Colonic mucosa (tissue), 4 donors: ENCODE measurements at regions of chr5 and their contacts with region 1.

Region 1: GRCh38 chr5:142699184-142699720 is 13.4 kb upstream of the FGF1 start:
- DNase-seq: peak; percentile 88
- H3K4me3 ChIP-seq: no peak overlapping the region
- H3K27ac ChIP-seq: no peak overlapping the region
- H3K4me1 ChIP-seq: no peaks in the 10 kb centered on the region
- H3K27me3 ChIP-seq: no peaks in the 10 kb centered on the region
- CTCF ChIP-seq: peak; percentile 96

Region 2: DNA sequence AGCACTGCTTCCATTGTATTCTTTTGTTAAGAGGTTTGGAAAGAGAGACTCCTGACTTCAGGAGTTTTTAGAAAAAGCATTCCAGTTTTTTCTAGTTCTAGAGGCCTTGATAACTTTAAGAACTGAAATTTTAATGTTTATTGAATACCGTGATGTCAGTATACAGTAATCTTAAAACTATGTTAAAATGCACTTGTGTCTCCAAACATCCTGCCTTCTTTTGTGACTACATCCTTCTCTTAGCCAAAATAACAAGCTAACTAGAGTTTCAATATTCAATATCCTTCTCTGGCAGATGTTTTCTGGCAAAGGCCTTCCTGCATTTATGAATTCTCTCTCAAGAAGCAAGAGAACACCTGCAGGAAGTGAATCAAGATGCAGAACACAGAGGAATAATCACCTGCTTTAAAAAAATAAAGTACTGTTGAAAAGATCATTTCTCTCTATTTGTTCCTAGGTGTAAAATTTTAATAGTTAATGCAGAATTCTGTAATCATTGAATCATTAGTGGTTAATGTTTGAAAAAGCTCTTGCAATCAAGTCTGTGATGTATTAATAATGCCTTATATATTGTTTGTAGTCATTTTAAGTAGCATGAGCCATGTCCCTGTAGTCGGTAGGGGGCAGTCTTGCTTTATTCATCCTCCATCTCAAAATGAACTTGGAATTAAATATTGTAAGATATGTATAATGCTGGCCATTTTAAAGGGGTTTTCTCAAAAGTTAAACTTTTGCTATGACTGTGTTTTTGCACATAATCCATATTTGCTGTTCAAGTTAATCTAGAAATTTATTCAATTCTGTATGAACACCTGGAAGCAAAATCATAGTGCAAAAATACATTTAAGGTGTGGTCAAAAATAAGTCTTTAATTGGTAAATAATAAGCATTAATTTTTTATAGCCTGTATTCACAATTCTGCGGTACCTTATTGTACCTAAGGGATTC is 547.5 kb before region 1 on chr5:
- intact Hi-C with region 1: loop called (anchors 10 kb)
- DNase-seq: peak; percentile 67
- H3K4me3 ChIP-seq: no peak overlapping the region
- H3K27ac ChIP-seq: no peak overlapping the region
- H3K4me1 ChIP-seq: no peaks in the 10 kb centered on the region
- H3K27me3 ChIP-seq: no peaks in the 10 kb centered on the region
- CTCF ChIP-seq: peak; percentile 87

Region 3: GRCh38 chr5:142611154-142611553 is 88.1 kb before region 1 on chr5:
- intact Hi-C with region 1: loop called (anchors 2 kb)
- DNase-seq: peak; percentile 75
- H3K4me3 ChIP-seq: no peak overlapping the region
- H3K27ac ChIP-seq: no peak overlapping the region
- H3K4me1 ChIP-seq: no peaks in the 10 kb centered on the region
- H3K27me3 ChIP-seq: no peaks in the 10 kb centered on the region
- CTCF ChIP-seq: peak; percentile 79

Region 4: GRCh38 chr5:142655339-142656267 is 43.6 kb before region 1 on chr5:
- intact Hi-C with region 1: loop called (anchors 2 kb)
- DNase-seq: peak; percentile 79
- H3K4me3 ChIP-seq: no peak overlapping the region
- H3K27ac ChIP-seq: no peak overlapping the region
- H3K4me1 ChIP-seq: peaks cover 3% of the 10 kb centered on the region
- H3K27me3 ChIP-seq: no peaks in the 10 kb centered on the region
- CTCF ChIP-seq: peak; percentile 98